ENCODE measurements at regions of chr1 and their contacts with region 1.

Region 1: GRCh38 chr1:183881387-183882131 is 76.6 kb downstream of the RGL1 start:
- DNase-seq: peak; percentile 77
- ATAC-seq: peak; percentile 91
- H3K4me3 ChIP-seq: no peak overlapping the region
- H3K27ac ChIP-seq: no peak overlapping the region
- H3K4me1 ChIP-seq: peaks cover 27% of the 10 kb centered on the region
- H3K27me3 ChIP-seq: no peaks in the 10 kb centered on the region
- CTCF ChIP-seq: no peak
- EP300 ChIP-seq: 0 out of 4 replicates have a peak, but pooled peaks of 1 of the 2 experiments have one; percentile 10
- POLR2A ChIP-seq: no peak
- RAD21 ChIP-seq: no peak

Region 2: GRCh38 chr1:183812686-183813569 is 68.6 kb before region 1 on chr1:
- CTCF ChIA-PET with region 1: no interaction called
- POLR2A ChIA-PET with region 1: no interaction called
- in situ Hi-C with region 1: no loop called
- intact Hi-C with region 1: loop called (anchors 5 kb)
- DNase-seq: peak; percentile 82
- ATAC-seq: peak; percentile 90
- H3K4me3 ChIP-seq: peak overlapping the region in 2 of 3 experiments; percentile 27 to 48; a peak in 4 of 6 replicates
- H3K27ac ChIP-seq: no peak overlapping the region
- H3K4me1 ChIP-seq: peaks cover 18% of the 10 kb centered on the region
- H3K27me3 ChIP-seq: no peaks in the 10 kb centered on the region
- CTCF ChIP-seq: no peak
- EP300 ChIP-seq: no peak
- POLR2A ChIP-seq: no peak
- RAD21 ChIP-seq: no peak

Region 3: GRCh38 chr1:183932412-183932811 is 50.9 kb after region 1 on chr1:
- CTCF ChIA-PET with region 1: no interaction called
- POLR2A ChIA-PET with region 1: no interaction called
- in situ Hi-C with region 1: no loop called
- intact Hi-C with region 1: no loop called
- DNase-seq: no peak
- ATAC-seq: peak; percentile 60
- H3K4me3 ChIP-seq: no peak overlapping the region
- H3K27ac ChIP-seq: no peak overlapping the region
- H3K4me1 ChIP-seq: no peaks in the 10 kb centered on the region; the same call in 1 of the 2 replicates
- H3K27me3 ChIP-seq: no peaks in the 10 kb centered on the region
- CTCF ChIP-seq: no peak
- EP300 ChIP-seq: no peak
- POLR2A ChIP-seq: no peak
- RAD21 ChIP-seq: no peak

Measured in HepG2 (cell line).